Heart left ventricle (tissue), 16 donors: ENCODE measurements at regions of chr5 and their contacts with region 1.

Region 1: DNA sequence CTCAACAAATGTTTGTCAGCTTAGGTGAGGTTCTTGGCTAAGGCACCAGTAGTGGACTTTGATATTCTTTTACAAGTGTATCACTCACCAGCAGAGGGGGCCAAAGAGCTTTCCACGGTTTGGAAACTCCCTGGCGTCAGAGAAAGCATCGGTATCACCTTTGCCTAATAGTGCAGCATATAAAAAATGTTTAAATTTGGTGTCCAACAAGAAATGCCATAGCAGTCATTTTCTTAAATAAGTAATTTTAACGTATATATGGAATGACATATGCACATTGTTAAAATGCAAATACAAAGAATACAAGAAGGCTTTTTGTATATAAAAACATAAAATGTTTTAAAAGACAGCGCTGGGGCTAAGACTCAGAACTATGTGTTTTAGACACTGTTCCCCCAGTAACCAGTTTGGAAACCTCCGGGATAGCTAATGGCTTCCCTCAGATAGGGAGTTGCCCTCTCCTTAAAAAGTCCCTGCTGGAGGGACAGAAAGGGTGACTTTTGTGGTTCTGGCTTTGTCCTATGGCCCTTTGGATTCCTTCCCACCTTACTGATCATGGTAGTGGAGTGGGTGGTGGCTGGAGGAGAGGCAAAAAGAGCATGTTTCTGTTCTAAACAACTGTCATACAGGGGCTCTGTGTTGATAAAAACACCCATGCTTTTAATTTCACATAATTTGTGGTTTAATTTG is 124.6 kb downstream of the GPBP1 start:
- DNase-seq: peak in 4 of 5 donors; percentile 78 to 86 (median 85)
- ATAC-seq: peak; percentile 82 to 95 (median 89)
- H3K4me3 ChIP-seq: peak overlapping the region in 8 of 12 donors; percentile 0 to 44 (median 26)
- H3K27ac ChIP-seq: peak overlapping the region in 5 of 12 donors; percentile 18 to 62 (median 37)
- H3K4me1 ChIP-seq: peaks cover 0 to 15% (median 8%) of the 10 kb centered on the region in 12 donors
- H3K27me3 ChIP-seq: no peaks in the 10 kb centered on the region
- CTCF ChIP-seq: peak; percentile 72 to 92 (median 82)
- POLR2A ChIP-seq: no peak

Region 2: GRCh38 chr5:56783261-56783660 is 515.2 kb before region 1 on chr5:
- intact Hi-C with region 1: no loop called
- DNase-seq: no peak
- ATAC-seq: no peak
- H3K4me3 ChIP-seq: no peak overlapping the region
- H3K27ac ChIP-seq: no peak overlapping the region
- H3K4me1 ChIP-seq: no peaks in the 10 kb centered on the region
- H3K27me3 ChIP-seq: no peaks in the 10 kb centered on the region
- CTCF ChIP-seq: no peak
- POLR2A ChIP-seq: no peak

Region 3: DNA sequence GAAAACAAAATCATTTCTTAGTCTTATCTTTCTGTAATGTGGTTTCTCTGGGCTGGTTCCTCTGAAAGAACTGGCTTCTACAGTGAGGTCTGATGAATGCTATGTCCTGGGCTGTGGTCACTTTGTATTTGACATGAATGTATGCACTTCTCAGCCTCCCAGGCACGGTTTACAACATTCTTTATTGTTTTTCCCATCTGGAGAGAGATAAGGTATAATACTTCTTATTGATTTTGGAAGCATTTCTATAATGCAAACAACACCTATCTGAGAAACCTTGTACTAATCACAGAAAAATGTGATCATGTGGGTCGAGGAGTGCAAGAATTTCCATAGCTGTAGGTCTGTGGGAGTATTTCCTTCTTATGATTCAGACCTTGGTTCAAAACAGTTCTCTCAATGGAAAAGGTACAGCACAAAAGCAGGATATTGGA is 137.3 kb after region 1 on chr5:
- intact Hi-C with region 1: loop called in 3 of 10 experiments (anchors 5 to 10 kb)
- DNase-seq: no peak
- ATAC-seq: peak in 2 of 4 donors; percentile 18 to 32
- H3K4me3 ChIP-seq: no peak overlapping the region
- H3K27ac ChIP-seq: no peak overlapping the region
- H3K4me1 ChIP-seq: peaks cover 0 to 20% (median 2%) of the 10 kb centered on the region in 12 donors
- H3K27me3 ChIP-seq: no peaks in the 10 kb centered on the region
- CTCF ChIP-seq: no peak
- POLR2A ChIP-seq: no peak

Region 4: GRCh38 chr5:57494104-57495098 is 196.0 kb after region 1 on chr5:
- intact Hi-C with region 1: loop called in 8 of 10 experiments (anchors 2 to 5 kb)
- DNase-seq: peak; percentile 41 to 73 (median 67)
- ATAC-seq: peak in 3 of 4 donors; percentile 77 to 88 (median 86)
- H3K4me3 ChIP-seq: no peak overlapping the region
- H3K27ac ChIP-seq: peak overlapping the region in 1 of 12 donors; percentile 30
- H3K4me1 ChIP-seq: peaks cover 0 to 29% (median 11%) of the 10 kb centered on the region in 12 donors
- H3K27me3 ChIP-seq: no peaks in the 10 kb centered on the region
- CTCF ChIP-seq: no peak
- POLR2A ChIP-seq: no peak

Region 5: DNA sequence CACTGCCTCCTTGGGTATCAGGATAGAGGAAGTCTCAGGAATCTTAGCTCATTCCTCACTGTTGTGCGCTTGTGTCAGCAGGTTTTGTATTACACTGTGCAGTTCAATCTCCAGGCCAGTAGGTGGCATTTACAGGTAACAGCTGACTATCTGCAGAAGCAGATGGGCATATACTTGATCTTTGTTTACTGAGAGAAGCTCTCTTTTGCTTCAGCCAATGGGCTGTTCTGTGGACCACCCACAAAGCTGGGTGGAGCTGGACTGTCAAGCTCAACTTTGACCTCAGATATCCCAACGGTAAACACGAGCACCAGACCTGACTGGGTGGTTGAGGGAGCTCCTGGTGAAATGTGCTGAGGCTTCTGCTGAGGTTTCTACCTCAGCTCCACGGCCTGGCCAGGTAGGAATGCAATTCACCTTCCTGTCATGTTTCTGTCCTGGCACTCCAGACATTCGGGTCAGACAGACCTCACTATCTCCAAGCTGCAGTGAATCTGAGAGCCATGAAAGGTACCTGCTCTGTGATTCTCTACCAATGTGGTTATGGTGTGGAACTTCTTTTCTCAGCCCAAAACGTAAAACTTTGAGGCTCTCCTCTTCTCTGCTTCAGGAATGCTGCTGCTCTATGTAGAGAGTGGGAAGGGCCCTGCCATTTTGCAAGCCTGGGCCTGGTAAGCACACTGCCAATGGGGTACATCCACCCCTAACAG is 352.1 kb after region 1 on chr5:
- intact Hi-C with region 1: loop called in 3 of 10 experiments (anchors 5 to 10 kb)
- DNase-seq: no peak
- ATAC-seq: peak in 2 of 4 donors; percentile 50 to 61
- H3K4me3 ChIP-seq: no peak overlapping the region
- H3K27ac ChIP-seq: no peak overlapping the region
- H3K4me1 ChIP-seq: peaks cover 0 to 16% (median 0%) of the 10 kb centered on the region in 12 donors
- H3K27me3 ChIP-seq: no peaks in the 10 kb centered on the region
- CTCF ChIP-seq: peak; percentile 33 to 61 (median 51)
- POLR2A ChIP-seq: no peak

Region 6: DNA sequence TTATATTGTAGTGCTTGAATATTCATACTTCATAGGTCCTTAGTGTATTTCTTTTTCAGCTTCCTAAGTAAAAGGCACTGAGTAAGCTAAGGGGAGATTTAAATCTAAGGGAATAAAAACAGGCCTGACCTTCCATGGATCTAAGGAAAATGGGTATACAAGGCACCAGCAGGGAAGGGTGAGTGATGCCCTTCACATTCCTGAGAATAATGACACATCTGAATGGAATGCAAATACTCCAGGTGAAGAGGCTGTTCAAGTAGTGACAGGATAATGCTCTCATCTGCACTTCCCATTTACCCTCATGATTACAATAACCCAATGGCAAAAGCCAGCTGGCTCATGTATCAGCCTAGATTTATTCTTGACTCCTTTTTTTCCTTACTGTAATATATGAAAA is 400.3 kb after region 1 on chr5:
- intact Hi-C with region 1: loop called in 1 of 10 experiments (anchors 5 kb)
- DNase-seq: no peak
- ATAC-seq: no peak
- H3K4me3 ChIP-seq: no peak overlapping the region
- H3K27ac ChIP-seq: peak overlapping the region in 11 of 12 donors; percentile 19 to 88 (median 76)
- H3K4me1 ChIP-seq: peaks cover 2 to 55% (median 30%) of the 10 kb centered on the region in 12 donors
- H3K27me3 ChIP-seq: no peaks in the 10 kb centered on the region
- CTCF ChIP-seq: no peak
- POLR2A ChIP-seq: no peak

Region 7: DNA sequence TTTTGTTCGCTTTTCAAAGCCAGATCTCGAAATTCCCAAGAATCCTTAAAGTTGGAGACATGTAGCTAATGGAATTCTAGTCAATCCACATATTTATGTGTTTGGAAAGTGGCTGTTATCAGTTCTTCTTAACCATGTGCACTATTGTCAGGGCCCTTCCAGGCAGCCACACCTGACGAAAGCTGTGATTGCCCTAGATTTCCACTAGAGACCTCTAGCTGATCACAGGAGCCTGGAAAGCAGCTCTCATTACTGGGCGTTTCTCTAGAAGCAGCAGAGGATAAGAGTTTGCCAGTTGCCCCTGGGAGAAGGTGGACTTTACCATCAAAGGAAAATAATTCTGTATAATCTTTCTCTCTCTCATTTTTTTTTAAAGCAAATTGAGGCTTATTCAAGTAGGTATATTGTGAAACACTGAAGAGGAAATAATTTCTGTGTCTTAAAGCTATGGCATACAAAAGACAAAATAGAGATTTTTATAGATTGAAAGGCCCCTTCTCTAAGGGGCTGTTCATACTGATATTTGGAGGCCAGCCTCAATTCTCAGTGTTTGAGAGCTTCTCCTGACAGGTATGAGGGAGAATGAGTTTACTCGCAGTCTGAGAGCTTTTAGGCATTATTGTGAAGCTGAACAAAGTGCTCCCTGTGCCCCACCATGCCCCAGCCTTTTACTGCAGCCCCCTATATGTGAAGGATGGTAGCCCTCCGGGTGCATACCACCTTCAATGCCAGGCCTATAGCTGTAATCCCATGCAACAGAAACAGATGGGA is 589.6 kb after region 1 on chr5:
- intact Hi-C with region 1: loop called (anchors 2 to 10 kb)
- DNase-seq: peak in 4 of 5 donors; percentile 47 to 64 (median 60)
- ATAC-seq: peak; percentile 76 to 96 (median 93)
- H3K4me3 ChIP-seq: no peak overlapping the region
- H3K27ac ChIP-seq: peak overlapping the region in 2 of 12 donors; percentile 1 to 32
- H3K4me1 ChIP-seq: peaks cover 0 to 19% (median 6%) of the 10 kb centered on the region in 12 donors
- H3K27me3 ChIP-seq: no peaks in the 10 kb centered on the region
- CTCF ChIP-seq: peak; percentile 39 to 82 (median 66)
- POLR2A ChIP-seq: no peak